Activated CD4-positive, alpha-beta memory T cell treated with anti-CD3 and anti-CD28 coated beads, Interleukin-2, amount 10 ng/mL, durations not matched to agents 7 days and 5 days (primary cell): ENCODE measurements at regions of chr7 and their contacts with region 1.

Region 1: DNA sequence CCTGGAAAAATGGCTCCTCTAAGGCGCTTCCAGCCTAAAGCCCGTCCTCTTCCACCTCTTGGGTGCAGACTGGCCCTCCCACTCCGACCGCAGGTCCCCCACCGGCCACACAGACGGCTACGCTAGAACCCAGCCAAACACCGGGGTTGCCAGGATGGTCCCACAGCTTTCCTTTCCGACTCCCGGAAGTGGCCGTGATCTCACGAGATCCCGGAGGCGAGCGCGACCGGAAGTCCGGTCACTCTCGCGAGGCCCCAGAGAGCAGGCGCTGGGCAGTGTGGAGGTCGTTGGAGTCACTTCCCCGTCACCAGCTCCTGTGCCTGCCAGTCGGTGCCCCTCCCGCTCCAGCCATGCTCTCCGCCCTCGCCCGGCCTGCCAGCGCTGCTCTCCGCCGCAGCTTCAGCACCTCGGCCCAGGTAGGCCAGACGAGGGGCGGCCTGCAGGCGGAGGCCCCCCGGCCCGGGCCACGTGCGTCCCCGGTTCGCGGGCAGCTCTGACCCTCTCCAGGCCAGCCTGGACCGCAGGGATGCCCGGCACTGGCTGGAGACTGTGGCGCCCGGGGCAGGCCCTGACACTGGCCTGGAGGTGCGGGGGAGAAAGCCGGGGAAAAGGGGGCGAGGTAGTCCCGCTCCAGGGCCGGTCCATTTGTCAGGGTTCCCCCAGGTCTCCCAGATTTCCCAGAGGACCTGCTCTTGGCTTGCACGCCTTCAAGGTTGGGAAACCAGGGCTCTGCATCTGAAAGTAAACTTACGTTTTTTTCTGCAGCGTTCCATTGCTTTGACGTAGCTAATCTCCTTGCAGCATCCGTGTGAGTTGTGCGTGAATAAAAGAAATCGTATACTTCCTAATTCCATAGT is at the starts of genes MDH2 and STYXL1:
- DNase-seq: peak; percentile 93
- H3K4me3 Mint-ChIP-seq: peak within 1 kb of the TSS; percentile 95
- H3K27ac Mint-ChIP-seq: peak within 1 kb of the TSS; percentile 93
- H3K4me1 Mint-ChIP-seq: peaks cover 56% of the 10 kb centered on the region
- H3K27me3 Mint-ChIP-seq: no peaks in the 10 kb centered on the region
- total RNA-seq, gene MDH2: 159 to 161 TPM
- total RNA-seq, gene STYXL1: 37.3 to 40.4 TPM

Region 2: DNA sequence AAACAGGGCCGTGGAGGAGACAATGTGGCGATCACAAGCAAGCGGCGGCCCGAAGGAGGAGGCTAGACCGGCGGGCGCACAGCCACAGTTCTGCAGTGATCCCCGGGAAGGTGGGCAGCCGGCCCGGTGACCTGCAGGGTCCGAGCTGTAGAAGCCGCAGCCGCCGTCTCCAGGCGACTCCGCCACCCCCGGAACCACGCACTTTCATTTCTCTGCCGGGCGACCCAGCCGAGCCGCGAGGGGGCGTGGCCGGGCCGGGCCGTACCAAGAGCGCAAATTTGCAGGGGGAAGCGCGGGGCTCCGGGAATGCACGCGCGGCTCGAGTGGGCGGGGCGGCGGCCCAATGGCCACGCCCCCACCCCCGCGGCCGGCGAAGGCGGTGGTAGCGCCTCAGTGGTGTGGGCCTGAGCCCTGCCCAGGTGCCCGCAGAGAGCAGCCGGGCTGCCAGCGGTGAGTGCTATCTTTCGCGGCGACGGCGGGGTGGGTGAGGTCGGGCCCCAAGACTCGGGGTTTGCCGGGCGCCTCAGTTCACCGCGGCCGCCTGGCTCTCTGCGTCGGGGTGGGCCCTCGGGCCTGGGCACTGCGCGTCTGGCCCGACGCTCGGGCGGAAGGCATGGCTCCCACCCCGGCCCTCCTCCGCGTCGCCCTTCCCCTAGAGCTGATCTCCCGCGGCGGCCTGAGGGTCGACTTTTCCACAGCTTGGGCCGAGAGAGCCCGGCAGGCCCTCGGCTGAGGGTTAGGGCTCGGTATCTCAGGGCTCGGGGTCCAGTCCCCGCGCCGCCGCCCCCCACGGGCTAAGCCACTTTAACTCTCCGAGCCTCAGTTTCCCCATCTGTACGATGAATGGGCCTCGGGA is 133.1 kb before region 1 on chr7 and contains the start of gene POR:
- CTCF ChIA-PET with region 1: interaction called, 3 read pairs
- POLR2A ChIA-PET with region 1: interaction called, 18 read pairs
- DNase-seq: peak; percentile 97
- H3K4me3 Mint-ChIP-seq: peak within 1 kb of the TSS; percentile 86
- H3K27ac Mint-ChIP-seq: peak within 1 kb of the TSS; percentile 81
- H3K4me1 Mint-ChIP-seq: peaks cover 23% of the 10 kb centered on the region
- H3K27me3 Mint-ChIP-seq: no peaks in the 10 kb centered on the region
- total RNA-seq, gene POR: 34.0 to 45.3 TPM

Region 3: DNA sequence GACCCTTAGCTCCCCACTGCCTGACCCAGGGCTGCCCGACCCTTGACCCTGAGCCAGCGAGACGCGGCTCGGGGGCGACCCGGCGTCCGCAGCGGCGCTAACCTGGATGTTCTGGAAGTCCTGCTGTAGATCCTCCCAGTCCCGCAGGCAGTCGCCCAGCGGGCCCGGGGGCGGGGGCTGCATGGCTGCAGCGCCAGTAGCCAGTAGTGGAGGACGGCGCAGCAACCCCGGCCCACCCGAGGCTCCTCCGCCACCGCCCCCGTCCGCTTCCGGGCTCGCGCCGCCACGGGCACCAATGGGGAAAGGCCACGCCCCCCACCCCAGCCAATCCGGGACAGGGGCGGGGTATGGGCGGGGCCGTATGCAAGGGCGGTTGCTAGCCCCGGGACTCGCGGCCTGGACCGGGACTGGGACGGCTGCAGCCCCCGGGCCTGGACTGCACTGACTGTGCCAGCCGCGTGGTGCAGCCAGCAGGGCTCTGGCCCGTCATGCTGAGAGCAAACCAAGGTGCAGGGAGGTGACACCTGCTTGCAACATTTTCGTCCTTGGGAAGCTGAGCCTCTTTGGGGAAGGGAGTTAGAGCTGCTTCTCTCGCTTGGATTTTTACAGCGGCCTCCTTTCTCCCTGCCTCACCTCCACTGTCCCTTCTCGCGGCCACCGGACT is 53.5 kb before region 1 on chr7 and contains the start of gene TMEM120A:
- CTCF ChIA-PET with region 1: no interaction called
- POLR2A ChIA-PET with region 1: interaction called, 12 read pairs
- DNase-seq: peak; percentile 95
- H3K4me3 Mint-ChIP-seq: peak within 1 kb of the TSS; percentile 69
- H3K27ac Mint-ChIP-seq: no peak within 1 kb of the TSS
- H3K4me1 Mint-ChIP-seq: peaks cover 46% of the 10 kb centered on the region
- H3K27me3 Mint-ChIP-seq: no peaks in the 10 kb centered on the region
- total RNA-seq, gene TMEM120A: 34.3 to 34.9 TPM

Region 4: DNA sequence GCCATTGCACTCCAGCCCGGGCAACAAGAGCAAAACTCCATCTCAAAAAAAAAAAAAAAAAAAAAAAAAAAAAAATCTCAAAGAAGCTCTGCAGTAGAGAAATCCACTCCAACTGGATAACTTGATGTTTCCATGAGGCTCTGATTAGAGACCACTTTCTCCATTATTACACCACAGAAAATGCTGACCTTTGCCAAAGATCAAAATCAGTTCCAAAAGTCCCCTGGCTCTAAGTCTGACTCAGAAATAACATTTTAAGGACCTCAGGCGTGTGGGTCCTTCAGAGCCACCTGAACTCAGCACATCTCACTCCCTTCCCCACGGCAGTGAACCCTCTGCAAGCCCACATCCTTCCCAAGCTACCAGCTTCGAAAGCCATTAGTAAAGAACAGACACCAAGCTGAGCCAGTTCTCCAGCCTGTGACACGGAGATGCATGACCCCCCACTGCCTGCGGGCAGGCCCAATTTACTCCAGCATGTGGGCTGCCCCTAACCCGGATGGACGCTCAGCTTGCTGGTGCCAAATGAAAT is 39.8 kb before region 1 on chr7:
- CTCF ChIA-PET with region 1: no interaction called
- POLR2A ChIA-PET with region 1: interaction called, 11 read pairs
- DNase-seq: peak; percentile 48
- H3K4me3 Mint-ChIP-seq: no peak overlapping the region
- H3K27ac Mint-ChIP-seq: peak overlapping the region; percentile 78
- H3K4me1 Mint-ChIP-seq: peaks cover 31% of the 10 kb centered on the region
- H3K27me3 Mint-ChIP-seq: peaks cover 6% of the 10 kb centered on the region

Region 5: GRCh38 chr7:76282344-76283253 is 234.6 kb after region 1 on chr7:
- CTCF ChIA-PET with region 1: no interaction called
- POLR2A ChIA-PET with region 1: no interaction called
- DNase-seq: no peak
- H3K4me3 Mint-ChIP-seq: peak overlapping the region; percentile 37
- H3K27ac Mint-ChIP-seq: no peak overlapping the region
- H3K4me1 Mint-ChIP-seq: peaks cover 13% of the 10 kb centered on the region
- H3K27me3 Mint-ChIP-seq: peaks cover 46% of the 10 kb centered on the region